Activated CD4-positive, alpha-beta memory T cell treated with anti-CD3 and anti-CD28 coated beads, Interleukin-2, amount 10 ng/mL, durations not matched to agents 7 days and 5 days (primary cell): ENCODE measurements at regions of chr1 and their contacts with region 1.

Region 1: DNA sequence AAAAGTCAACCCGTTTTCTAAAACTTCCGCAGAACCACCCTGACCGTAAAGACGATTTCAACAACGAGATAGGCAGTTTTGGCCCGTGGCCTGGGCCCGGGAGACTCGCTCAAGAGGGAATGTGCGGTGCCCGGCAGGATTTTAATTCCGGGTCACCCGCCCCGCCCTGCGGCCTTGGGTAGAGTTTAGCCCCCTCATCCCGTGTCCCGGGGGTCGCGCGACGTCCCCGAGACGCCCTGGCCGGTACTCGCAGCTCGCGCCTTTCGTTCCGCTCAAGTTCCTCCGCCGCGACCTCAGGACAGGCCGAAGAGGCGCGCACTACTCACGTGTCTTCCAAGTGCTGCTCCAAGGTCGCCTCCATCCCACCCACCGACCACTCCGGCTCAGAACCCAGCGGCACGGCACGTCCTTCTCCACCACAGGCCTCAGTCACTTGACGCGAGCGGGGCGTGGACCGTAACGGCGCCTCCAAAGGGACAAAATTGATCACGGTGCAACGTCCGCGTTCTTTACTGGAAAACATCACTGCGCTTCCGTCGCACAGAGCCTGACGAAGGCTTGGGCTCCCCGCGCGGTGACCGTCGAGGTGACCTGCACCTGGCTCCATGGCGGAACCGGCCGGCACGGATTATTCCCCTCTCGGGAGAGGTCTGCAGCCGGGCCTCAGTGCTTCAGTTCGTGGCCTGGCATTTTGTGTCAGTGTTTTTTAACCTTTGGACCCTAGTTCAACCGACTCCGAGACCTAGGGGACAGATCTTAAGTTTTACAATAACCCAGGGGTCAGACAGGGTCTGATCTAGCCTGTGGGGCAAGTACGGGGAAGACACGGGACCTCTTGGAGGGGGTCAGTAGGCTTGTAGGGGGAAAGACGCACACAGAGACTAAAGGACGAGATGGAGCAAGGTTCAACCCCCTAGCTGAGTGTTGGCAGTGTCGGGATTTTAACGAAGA is at the start of gene LAMTOR5:
- DNase-seq: peak; percentile 94
- H3K4me3 Mint-ChIP-seq: peak within 1 kb of the TSS; percentile 95
- H3K27ac Mint-ChIP-seq: peak within 1 kb of the TSS; percentile 96
- H3K4me1 Mint-ChIP-seq: peaks cover 27% of the 10 kb centered on the region
- H3K27me3 Mint-ChIP-seq: no peaks in the 10 kb centered on the region
- total RNA-seq, gene LAMTOR5: 127 to 128 TPM

Region 2: DNA sequence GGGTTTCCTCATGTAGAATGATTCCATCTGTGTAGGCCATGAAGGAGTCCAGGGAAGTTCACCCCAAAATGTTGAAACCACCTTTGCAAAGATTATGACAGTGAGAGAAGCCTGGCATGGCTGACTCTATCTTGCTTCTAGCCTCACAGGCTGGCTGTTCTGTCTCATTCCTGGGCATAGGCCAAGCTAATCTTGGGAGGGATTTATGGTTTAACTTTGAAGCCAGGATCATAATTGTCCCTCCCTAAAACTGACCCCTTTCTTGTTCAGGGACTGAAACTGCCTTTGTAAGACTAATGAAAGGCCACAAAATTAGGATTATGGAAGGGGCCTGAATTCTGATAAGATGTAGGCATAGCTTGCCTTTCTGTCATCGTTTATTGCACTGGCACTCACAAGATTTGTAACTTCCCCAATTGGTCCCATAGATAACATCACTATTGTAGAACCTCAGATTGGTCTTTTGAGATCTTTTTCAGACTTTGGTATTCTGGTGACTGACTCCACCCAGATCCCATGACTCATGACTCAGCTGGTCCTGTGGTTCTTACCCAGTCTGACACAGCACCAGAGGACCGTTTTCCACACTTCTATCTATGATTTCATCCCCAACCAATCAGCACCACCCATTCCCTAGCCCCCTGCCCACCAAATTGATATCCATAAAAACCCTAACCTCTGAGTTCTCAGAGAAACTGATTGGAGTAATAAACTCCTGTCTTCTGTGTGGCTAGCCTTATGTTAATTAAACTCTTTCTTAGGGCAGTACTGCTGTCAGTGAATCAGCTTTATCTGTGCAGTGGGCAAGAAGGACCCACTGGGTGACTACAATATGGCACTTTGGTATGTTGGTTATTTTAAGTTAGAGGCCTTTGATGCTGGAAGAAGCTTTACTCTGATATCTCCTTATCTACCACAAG is 13.6 kb after region 1 on chr1:
- CTCF ChIA-PET with region 1: interaction called, 26 read pairs
- POLR2A ChIA-PET with region 1: interaction called, 5 read pairs
- DNase-seq: peak; percentile 46
- H3K4me3 Mint-ChIP-seq: no peak overlapping the region
- H3K27ac Mint-ChIP-seq: no peak overlapping the region
- H3K4me1 Mint-ChIP-seq: peaks cover 28% of the 10 kb centered on the region
- H3K27me3 Mint-ChIP-seq: peaks cover 11% of the 10 kb centered on the region